Activated B cell treated with CpG ODN at 0.5 μM for 24 hours (primary cell): ENCODE measurements at regions of chr21 and their contacts with region 1.

Region 1: GRCh38 chr21:45554477-45555175 is 12.4 kb upstream of the SLC19A1 start:
- DNase-seq: peak; percentile 94
- ATAC-seq: peak; percentile 80
- H3K4me3 Mint-ChIP-seq: peak overlapping the region; percentile 89
- H3K27ac Mint-ChIP-seq: peak overlapping the region; percentile 71
- H3K4me1 Mint-ChIP-seq: peaks cover 40% of the 10 kb centered on the region
- H3K27me3 Mint-ChIP-seq: no peaks in the 10 kb centered on the region
- CTCF ChIP-seq: no peak

Region 2: GRCh38 chr21:44710756-44711326 is 843.8 kb before region 1 on chr21:
- CTCF ChIA-PET with region 1: no interaction called
- POLR2A ChIA-PET with region 1: no interaction called
- intact Hi-C with region 1: no loop called
- DNase-seq: no peak
- ATAC-seq: no peak
- H3K4me3 Mint-ChIP-seq: no peak overlapping the region
- H3K27ac Mint-ChIP-seq: no peak overlapping the region
- H3K4me1 Mint-ChIP-seq: peaks cover 2% of the 10 kb centered on the region
- H3K27me3 Mint-ChIP-seq: peaks cover 67% of the 10 kb centered on the region
- CTCF ChIP-seq: no peak

Region 3: DNA sequence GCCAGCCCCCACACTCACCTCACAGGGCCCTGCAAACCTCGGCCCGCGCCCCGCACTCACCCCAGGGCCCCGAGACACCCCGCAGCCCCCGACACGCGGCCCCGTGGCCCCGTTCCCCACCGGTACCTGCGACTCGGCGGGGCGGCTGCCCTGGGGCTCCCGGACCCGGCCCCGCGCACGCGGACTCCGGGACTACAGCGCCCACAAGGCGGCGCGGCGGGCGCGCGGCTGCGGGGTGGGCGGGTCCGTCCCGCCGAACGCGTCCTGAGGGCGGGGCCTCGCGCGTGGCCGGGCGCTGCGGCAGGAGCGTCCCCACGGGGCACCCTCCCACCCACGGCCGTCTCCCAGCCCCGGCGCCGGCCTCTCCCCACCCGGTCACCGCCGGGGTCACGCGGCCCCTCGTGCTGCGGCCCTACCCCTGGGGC is 12.4 kb before region 1 on chr21 and contains the start of gene SLC19A1:
- CTCF ChIA-PET with region 1: no interaction called
- POLR2A ChIA-PET with region 1: no interaction called
- intact Hi-C with region 1: loop called (anchors 1 kb)
- DNase-seq: peak; percentile 81
- ATAC-seq: peak; percentile 94
- H3K4me3 Mint-ChIP-seq: peak within 1 kb of the TSS; percentile 77
- H3K27ac Mint-ChIP-seq: no peak within 1 kb of the TSS
- H3K4me1 Mint-ChIP-seq: peaks cover 4% of the 10 kb centered on the region
- H3K27me3 Mint-ChIP-seq: no peaks in the 10 kb centered on the region
- CTCF ChIP-seq: no peak
- total RNA-seq, gene SLC19A1: 7.4 and 10.7 TPM in 2 replicates

Region 4: DNA sequence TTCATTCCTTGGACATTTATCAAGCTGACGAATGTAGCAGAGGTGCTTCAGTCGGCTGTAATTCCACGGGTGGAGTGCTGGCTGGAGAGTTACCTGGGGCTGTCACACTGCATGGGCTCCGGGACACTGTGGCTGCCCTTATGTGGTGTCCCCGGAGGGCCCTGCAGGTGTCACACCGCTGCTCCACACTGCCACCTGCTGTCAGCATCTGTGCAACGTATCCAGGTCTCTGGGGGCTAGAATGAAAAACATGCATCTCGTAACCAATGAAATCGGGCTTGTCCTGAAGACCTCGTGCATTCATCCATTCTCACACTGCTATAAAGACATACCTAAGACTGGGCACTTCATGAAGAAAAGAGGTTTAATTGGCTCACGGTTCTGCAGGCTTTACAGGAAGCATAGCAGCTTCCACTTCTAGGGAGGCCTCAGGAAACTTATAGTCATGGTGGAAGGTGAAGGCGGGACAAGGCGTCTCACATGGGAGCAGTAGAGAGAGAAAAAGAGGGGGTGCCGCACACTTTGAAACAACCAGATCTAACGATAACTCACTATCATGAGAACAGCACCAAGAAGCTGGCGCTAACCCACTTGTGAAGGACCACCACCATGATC is 42.2 kb after region 1 on chr21:
- CTCF ChIA-PET with region 1: interaction called, 16 read pairs
- POLR2A ChIA-PET with region 1: interaction called, 3 read pairs
- intact Hi-C with region 1: loop called (anchors 1 kb)
- DNase-seq: peak; percentile 74
- ATAC-seq: peak; percentile 82
- H3K4me3 Mint-ChIP-seq: no peak overlapping the region
- H3K27ac Mint-ChIP-seq: no peak overlapping the region
- H3K4me1 Mint-ChIP-seq: peaks cover 10% of the 10 kb centered on the region
- H3K27me3 Mint-ChIP-seq: peaks cover 13% of the 10 kb centered on the region
- CTCF ChIP-seq: no peak

Region 5: DNA sequence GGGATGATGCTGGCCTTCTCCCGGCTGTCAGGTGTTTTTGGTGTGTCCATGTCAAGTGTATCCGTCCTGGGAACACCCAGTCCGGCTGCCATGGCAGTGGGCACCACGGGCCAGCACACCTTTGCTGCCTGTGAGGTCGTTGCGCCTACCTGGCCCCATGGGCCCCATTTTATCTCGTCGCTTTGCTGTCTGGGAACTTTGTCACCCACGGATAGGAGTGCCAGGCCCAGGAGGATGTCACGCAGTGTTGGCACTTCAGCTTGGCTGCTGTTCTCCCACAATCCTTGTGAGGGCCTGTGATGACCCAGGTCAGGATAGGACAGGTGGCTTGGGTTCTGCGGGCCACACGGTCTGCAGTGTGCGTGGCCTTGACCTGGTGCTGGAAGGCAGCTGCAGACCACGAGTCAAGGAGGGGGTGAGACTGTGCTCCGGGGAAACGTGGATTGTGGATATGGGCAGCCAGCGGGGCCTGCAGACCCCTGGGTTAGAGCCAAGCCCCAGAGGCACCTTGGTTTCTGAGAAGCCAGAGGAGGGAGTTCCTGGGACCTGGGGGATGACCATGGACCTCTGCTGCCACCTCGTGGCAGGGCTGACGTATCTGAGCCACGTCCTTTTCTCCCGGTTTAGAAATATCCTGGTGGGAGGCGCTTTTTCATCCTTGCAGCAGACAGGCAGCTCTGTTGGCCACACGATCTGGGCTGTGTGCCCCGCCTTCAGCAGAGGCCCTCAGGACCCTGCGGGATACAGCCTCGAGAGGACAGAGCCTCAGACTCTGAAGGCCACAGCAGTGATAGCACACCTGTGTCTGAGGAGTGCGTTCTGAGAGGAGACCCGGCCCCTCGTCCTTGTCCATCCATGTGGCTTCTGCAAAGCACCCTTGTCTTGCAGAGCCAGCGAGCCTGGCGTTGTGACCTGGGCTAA is 265.8 kb after region 1 on chr21:
- CTCF ChIA-PET with region 1: interaction called, 3 read pairs
- POLR2A ChIA-PET with region 1: no interaction called
- intact Hi-C with region 1: loop called (anchors 1 kb)
- DNase-seq: peak; percentile 60
- ATAC-seq: peak; percentile 73
- H3K4me3 Mint-ChIP-seq: no peak overlapping the region
- H3K27ac Mint-ChIP-seq: no peak overlapping the region
- H3K4me1 Mint-ChIP-seq: peaks cover 3% of the 10 kb centered on the region
- H3K27me3 Mint-ChIP-seq: peaks cover 23% of the 10 kb centered on the region
- CTCF ChIP-seq: no peak